Right ventricle myocardium inferior (tissue), 1 donor: ENCODE measurements at regions of chr6 and their contacts with region 1.

Region 1: GRCh38 chr6:6315660-6316059 is 4.8 kb downstream of the F13A1 start:
- DNase-seq: peak; percentile 59
- ATAC-seq: no peak

Region 2: GRCh38 chr6:6057424-6058053 is 258.1 kb before region 1 on chr6:
- intact Hi-C with region 1: loop called (anchors 10 kb)
- DNase-seq: no peak
- ATAC-seq: peak; percentile 48

Region 3: DNA sequence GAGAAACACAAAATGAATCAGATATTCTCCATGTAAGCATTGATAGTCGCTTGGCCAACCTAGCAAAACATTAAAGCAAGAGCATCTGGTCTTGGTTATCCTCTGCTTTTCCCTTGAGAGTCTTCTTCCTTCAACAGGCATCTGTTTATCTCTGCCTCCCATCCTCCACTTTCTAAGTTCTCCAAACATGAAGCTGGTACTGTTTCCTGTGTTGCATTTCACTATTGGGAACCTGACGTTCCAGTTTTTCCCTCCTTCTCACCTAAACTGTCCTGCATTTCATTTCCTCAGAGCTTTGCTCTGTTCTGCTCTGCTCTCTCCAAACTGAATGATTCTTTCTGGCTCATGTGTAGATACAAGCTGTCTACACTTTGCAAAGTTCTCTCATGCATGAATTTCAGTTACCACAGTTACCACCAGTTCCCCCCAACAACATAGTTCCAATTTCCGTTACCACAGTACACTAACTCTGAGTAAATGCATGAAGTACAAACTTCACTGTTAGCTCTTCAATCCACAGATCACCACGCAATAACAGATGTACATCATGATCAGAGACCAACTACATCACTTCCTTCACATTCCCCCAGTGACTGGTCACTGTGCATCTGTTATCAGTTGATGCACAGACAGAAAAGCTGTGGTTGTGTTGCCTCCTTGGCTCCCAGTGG is 91.5 kb after region 1 on chr6:
- intact Hi-C with region 1: loop called (anchors 5 kb)
- DNase-seq: no peak
- ATAC-seq: peak; percentile 62

Region 4: DNA sequence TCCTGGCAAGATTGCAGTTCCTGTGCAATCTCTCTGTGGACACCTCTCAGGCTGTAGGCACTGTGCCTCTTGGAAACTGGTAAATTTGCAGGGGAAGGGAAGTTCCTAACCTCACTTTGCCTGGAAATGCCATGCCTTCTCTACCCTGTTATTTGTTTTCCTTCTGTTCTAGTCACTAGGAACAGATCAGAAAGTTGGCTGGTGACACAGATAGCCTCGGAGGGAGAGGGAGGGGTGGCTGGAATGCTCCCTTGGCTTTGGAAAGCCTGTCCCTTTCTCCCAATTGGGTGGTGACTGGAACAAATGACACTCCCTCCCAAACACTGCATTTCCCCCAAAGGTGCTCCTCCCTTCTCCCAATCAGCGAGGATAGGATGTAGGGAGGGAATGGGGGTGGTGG is 136.3 kb after region 1 on chr6:
- intact Hi-C with region 1: loop called (anchors 5 kb)
- DNase-seq: no peak
- ATAC-seq: peak; percentile 93

Region 5: DNA sequence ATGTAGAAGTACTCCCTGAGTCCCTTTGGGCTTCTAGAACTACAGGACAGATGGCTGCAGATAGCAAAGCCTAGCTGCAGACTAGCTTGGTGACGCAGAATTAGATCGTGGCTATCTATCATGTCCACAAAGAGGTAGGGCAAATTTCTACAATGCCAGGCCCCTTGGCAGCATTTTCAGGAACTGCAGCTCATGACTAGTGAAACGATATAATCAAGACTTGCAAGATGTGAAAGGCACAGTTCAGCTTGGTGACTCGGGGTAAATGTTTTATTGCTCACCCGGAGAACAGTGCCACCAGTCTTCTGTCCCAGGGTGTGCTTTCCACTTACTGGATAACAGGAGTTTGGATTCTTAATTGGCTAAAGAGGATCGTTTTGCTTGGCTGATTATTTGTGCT is 164.1 kb after region 1 on chr6:
- intact Hi-C with region 1: loop called (anchors 5 kb)
- DNase-seq: no peak
- ATAC-seq: peak; percentile 50

Region 6: GRCh38 chr6:7261032-7261841 is 945.6 kb after region 1 on chr6:
- intact Hi-C with region 1: loop called (anchors 5 kb)
- DNase-seq: peak; percentile 95
- ATAC-seq: peak; percentile 98